HEK293T (cell line): ENCODE measurements at regions of chr16 and their contacts with region 1.

Region 1: DNA sequence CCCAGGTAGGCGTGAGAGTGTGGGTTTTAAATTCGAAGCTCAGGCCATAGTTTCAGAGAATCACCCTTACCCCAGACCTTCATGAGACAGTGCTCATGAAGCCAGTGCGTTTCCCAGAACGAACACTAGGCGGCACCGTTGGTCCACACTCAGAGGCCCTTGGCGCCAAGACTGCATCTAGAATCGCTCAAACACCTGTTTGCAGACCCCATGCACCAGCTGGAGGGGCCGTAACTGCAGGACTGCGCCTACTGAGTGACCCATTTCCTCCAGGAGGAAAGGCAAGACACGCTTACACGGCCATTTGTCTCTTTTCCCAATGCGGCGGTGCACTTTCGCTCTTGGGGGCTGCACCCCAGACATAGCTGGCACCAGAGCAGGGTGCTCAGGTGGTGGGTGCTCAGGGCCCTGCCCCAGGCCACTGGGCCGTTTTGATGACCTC is 34.0 kb downstream of the ADGRG5 start:
- DNase-seq: peak; percentile 76

Region 2: DNA sequence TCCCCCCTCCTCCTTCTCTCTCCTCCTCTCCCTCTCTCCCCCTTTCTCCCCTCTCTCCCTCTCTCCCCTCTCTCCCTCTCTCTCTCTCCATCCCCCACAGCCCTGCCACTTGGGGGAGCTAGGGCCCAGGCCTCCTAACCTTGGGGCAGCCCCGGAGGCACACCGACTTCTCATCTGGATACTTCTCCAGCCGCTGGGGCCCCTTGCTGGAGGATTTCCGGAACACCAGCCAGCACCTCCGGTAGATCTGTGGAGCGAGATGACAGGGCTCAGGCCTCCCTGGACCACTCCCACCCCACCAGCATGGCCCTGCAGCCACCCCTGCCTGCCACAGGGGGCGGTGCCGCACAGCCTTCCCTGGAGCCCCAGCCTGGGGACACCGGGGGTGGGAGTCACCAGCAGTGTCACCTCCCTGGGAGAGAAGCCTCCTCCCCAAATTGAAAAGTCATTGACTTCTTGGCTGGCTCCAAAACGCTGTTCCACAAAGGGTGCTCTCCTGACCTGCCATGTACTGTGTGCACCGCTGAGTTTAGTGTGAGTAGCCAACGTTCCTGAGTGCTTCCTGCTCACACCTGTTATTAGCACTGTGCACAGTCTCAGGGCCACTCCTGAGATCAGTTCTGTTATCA is 100.6 kb before region 1 on chr16:
- CTCF ChIA-PET with region 1: no interaction called
- POLR2A ChIA-PET with region 1: no interaction called
- DNase-seq: peak; percentile 82

Region 3: GRCh38 chr16:57519796-57520360 is 56.6 kb before region 1 on chr16:
- CTCF ChIA-PET with region 1: no interaction called
- POLR2A ChIA-PET with region 1: no interaction called
- DNase-seq: peak; percentile 86

Region 4: GRCh38 chr16:57564571-57565270 is 11.7 kb before region 1 on chr16:
- CTCF ChIA-PET with region 1: interaction called, 10 read pairs
- POLR2A ChIA-PET with region 1: no interaction called
- DNase-seq: no peak

Region 5: DNA sequence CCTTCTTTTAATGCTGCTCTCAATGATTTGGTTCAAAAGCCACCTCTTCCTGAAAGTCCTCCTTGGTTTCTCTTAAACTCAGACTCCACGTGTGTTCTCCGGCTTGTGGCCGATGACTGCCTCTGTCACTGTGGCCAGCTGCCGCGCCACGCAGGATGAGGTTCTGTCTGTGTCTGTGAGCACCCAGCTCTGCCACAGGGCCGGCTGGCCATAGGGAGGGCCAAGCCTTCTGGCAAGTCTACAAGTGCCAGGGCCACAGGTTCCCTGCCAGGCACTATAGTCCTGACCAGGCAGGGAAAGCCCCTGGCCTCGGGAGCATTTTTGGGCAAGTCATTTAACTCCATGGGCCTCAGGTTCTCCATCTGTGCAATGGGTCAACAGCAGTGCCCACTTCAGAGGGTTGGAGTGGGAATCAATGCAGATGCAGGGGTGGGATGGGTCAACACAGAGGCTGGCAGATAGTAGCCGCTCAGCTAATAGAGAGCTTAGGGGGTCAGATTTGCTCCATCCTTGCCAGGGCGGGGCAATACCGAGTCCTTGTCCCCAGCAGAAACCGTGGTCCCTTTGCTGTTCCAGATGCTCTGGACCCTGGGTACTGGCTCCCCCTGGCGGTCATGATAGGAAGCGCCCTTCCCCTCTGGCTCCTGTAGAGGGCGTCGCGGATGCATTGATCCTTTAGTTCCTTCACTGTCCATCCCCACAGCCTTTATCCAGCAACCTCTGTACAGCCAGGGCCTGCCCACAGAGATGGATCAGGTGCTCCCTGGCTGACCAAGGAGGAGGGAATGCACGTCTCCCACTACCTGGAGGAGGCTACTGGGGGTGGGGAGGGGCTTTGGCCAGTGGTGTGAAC is 72.4 kb after region 1 on chr16:
- CTCF ChIA-PET with region 1: interaction called, 21 read pairs
- POLR2A ChIA-PET with region 1: no interaction called
- DNase-seq: peak; percentile 91